Esophagus muscularis mucosa (tissue), 4 donors: ENCODE measurements at regions of chr20 and their contacts with region 1.

Region 1: DNA sequence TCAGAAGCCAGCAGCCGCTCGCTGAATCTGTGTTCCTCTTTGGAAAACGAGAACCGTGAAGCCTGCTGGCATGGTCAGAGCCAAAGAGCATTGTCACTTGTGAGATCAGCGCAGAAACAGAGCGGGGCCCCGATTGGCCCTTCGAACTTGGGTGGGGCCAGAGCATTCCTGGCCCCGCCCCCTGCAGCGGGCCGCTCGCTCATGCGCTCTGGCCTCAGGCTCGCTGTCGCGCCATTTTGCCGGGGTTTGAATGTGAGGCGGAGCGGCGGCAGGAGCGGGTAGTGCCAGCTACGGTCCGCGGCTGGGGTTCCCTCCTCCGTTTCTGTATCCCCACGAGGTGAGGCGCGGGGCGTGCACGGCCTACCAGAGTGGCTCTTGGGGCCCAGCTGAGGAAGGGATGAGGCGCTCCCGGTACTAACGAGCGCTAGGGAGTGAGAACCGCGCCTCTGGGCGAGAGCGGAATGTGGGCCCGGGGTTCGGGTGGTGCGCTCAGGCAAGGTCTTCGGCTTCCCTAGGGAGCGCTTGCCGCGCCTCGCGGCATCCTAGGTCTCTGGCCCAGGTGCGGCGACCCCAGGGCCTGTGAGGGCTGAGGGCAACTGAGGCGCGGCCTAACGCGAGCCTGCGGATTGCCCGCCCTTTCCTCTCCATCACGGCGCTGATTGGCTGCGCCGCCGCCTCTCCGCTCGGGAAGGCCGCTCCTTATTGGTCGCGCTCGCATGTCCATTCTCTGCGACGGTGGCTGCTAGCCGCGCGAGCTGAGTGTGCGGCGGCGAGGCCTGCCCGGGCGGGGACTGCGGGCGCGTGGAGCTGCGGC is at the start of gene CSE1L:
- DNase-seq: peak; percentile 98
- H3K4me3 ChIP-seq: peak within 1 kb of the TSS; percentile 88 to 100 (median 92)
- H3K27ac ChIP-seq: peak within 1 kb of the TSS; percentile 92 to 100 (median 96)
- H3K4me1 ChIP-seq: peaks cover 16 to 37% (median 24%) of the 10 kb centered on the region in 4 donors
- H3K27me3 ChIP-seq: no peaks in the 10 kb centered on the region
- CTCF ChIP-seq: peak in 2 of 3 experiments; percentile 23 to 25
- EP300 ChIP-seq: no peak
- POLR2A ChIP-seq: peak; percentile 57
- total RNA-seq, gene CSE1L: 33.8 to 41.3 (median 39.2) TPM

Region 2: GRCh38 chr20:49028684-49029083 is 17.6 kb before region 1 on chr20:
- intact Hi-C with region 1: loop called (anchors 2 kb)
- DNase-seq: no peak
- H3K4me3 ChIP-seq: no peak overlapping the region
- H3K27ac ChIP-seq: peak overlapping the region; percentile 32 to 75 (median 70)
- H3K4me1 ChIP-seq: peaks cover 0 to 30% (median 11%) of the 10 kb centered on the region in 4 donors
- H3K27me3 ChIP-seq: no peaks in the 10 kb centered on the region
- CTCF ChIP-seq: peak; percentile 13 to 57 (median 18)
- EP300 ChIP-seq: no peak
- POLR2A ChIP-seq: no peak

Region 3: DNA sequence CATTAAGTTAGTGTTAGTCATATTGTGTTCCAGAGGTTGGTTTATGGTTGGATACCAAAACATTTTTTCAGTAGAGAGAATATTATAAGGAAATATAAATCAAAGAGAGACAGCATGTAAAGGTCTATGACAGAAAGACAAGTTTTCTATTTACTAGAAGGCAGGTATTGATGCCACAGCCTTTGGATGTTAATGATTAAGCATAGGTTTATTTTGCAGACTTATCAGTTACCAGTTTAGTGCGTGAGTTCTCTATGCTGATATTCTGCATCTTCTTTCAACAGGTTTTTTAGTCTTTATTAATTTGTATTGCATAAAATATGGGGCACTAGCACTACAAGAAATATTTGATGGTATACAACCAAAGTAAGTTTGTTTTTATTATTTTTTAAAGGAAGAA is 45.5 kb after region 1 on chr20:
- intact Hi-C with region 1: no loop called
- DNase-seq: no peak
- H3K4me3 ChIP-seq: no peak overlapping the region
- H3K27ac ChIP-seq: no peak overlapping the region
- H3K4me1 ChIP-seq: no peaks in the 10 kb centered on the region
- H3K27me3 ChIP-seq: no peaks in the 10 kb centered on the region
- CTCF ChIP-seq: no peak
- EP300 ChIP-seq: no peak
- POLR2A ChIP-seq: no peak

Region 4: DNA sequence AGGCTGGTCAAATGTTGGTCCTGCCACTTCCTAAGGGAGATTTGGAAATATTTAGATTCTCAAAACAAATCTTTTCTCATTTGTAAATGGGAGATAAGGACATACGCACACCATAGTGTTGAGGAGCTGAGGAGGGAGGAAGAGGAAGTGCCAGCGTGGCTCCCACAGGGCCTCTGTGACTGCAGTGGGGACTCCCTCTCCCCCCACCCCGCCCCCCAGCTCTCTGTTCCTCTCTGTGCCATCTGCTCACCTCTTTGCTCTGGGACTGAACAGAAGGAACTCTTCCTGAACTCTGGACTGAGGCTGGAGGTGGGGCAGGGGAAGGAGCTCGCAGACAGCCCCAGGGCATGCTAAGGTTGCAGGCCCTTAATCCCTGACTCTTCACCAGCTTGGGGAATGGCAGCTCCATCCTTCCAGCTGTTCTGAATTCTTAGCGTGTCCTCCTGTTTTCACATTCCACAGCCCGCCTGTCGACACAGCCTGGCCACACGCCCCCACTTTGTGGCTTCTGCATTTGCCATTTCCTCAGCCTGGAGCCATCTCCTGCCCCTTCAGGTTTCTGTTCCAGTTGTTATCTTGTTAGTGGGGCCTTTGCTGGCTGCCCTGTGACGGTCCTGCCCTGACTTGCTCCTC is 184.4 kb after region 1 on chr20:
- intact Hi-C with region 1: no loop called
- DNase-seq: no peak
- H3K4me3 ChIP-seq: no peak overlapping the region
- H3K27ac ChIP-seq: no peak overlapping the region
- H3K4me1 ChIP-seq: no peaks in the 10 kb centered on the region
- H3K27me3 ChIP-seq: no peaks in the 10 kb centered on the region
- CTCF ChIP-seq: no peak
- EP300 ChIP-seq: no peak
- POLR2A ChIP-seq: no peak